ENCODE measurements at regions of chr1 and their contacts with region 1.

Region 1: DNA sequence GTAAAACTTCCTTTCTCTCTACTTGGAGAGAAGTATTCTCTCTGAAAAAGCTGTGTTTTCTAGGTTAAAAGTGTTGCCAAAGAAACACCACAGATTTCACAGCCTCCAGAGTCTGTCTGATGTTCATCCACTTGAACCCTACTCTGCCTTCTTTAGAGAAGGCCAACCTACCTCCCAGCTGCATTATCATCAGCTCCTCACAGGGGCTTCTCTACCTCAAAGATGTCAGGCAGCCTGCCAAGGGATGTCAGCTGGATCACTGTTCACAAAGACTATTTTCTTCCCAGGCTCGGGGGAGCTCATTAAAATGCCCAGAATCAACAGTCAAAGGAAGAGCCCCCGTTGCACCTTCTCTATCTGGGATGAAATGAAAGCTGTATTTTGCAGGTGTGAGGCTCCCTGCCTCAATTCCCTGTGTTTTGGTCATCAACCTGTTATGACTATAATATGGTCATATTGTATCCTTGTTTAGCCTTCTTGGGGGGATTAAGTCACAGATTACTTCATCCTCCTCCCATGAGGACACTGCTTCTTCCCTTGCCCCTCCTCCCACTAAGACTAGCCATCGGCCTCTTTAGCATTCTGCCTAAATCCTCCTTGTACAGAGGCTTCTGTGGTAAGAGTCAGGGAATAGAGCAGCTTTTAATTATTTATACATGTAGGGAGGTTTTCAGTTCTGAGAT is 25.7 kb downstream of the ANGPTL7 start:
- DNase-seq: no peak
- H3K4me3 ChIP-seq: no peak overlapping the region
- H3K27ac ChIP-seq: no peak overlapping the region
- H3K4me1 ChIP-seq: no peaks in the 10 kb centered on the region
- H3K27me3 ChIP-seq: no peaks in the 10 kb centered on the region
- CTCF ChIP-seq: no peak
- EP300 ChIP-seq: no peak
- POLR2A ChIP-seq: no peak

Region 2: DNA sequence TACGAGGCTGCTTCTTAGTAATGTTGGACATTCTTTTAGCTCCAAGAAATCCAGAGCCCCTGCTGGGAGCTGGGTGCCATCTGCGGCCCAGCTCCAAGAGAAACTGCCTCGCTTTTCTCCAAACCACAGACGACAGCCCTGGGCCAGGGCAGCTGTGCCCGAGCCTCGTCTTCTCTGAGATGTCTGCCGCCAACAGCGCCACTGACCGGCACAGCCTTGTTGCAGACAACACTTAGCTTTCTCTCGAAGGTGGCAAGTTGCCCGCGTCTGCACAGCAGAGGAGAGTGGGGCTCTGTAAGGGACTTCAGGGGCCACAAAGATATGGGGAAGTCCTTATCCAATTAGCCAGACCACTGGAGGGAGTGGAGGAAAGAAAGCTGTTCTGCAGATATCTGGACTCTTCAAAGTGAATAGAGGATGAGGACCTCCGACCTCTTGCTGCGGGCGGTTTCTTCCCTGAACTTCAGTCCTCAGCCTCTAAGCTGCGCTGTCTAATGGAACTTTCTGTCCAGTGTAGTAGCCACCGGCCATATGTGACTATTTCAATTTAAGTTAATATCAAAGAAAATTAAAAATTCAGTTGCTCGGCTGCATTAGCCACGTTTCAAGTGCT is 200.2 kb after region 1 on chr1:
- intact Hi-C with region 1: loop called (anchors 5 kb)
- DNase-seq: no peak
- H3K4me3 ChIP-seq: no peak overlapping the region
- H3K27ac ChIP-seq: no peak overlapping the region
- H3K4me1 ChIP-seq: no peaks in the 10 kb centered on the region
- H3K27me3 ChIP-seq: peaks cover 0 to 76% (median 30%) of the 10 kb centered on the region in 3 donors
- CTCF ChIP-seq: no peak
- EP300 ChIP-seq: no peak
- POLR2A ChIP-seq: no peak

Measured in stomach (tissue), 19 donors.